ENCODE measurements at regions of chr6 and their contacts with region 1.

Region 1: DNA sequence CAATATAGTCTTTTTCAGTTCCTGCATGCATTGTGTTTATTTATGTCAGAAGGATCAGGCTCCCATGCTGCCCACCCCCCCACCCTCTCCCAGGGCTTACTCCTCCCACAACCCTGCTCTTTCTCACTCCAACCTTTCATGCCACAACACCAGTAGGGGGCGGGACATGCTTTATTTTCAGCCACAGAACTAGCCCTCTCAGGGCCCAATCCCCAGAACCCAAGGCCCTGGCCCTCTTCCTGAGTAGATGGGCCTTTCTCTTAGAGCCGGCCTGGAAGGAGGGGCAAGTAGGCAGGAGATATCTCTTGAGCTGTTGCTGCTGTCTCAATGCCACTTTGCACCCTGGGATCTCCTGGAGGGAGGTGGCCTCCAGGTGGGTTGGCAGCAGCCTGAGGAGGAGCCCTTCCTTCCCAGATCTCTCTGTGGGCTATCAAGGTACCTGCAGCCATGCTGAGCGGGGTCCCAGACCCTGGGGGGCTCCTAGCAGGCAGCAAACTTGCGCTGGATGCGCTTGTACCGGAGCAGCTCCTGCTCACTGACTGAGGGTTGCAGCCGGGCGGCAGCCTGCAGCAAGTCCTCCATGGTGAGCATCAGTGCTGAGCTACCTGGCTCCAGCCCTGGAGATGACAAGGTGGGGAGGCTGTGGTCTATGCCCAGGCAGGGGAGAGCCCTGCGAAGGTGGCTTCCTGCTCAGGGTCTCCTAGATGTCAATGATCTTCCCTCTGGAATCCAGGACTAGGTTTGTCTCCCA is 3.5 kb downstream of the GNMT start:
- DNase-seq: peak; percentile 61
- H3K4me3 Mint-ChIP-seq: no peak overlapping the region
- H3K27ac Mint-ChIP-seq: no peak overlapping the region
- H3K4me1 Mint-ChIP-seq: peaks cover 7% of the 10 kb centered on the region
- H3K27me3 Mint-ChIP-seq: no peaks in the 10 kb centered on the region
- CTCF ChIP-seq: no peak

Region 2: DNA sequence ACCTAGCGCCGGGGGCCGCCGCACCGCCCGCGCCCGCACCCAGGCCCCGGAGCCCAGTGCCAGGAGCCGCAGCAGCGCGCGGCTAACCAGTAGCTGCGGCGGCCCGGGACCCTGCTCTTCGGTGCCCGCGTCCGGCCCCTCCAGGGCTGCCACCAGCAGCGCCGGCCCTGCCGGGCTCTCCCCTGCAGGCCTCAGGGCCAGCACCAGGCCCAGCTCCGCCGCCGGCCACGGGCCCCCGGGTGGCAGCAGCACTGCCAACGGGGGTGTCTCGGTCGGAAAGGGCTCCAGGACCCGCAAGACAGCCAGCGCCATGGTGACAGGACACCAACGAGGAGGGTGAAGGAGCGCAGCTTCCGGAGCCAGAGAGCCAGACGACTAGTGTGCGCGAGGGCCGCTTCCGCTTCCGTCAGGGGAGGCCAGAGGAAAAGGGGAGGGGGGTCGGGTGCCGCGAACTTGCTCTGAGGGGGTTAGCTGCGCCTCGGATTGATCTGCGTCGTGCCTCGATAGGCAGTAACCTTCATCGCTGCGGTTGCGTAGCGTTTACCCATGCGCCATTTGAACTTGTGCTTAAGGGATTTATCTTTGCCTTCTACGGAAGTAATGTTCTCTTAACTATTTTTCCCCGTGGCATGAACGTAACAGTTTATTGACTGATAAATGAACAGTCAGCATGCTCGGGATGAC is 15.0 kb after region 1 on chr6 and contains the start of gene PEX6:
- CTCF ChIA-PET with region 1: interaction called, 11 read pairs
- POLR2A ChIA-PET with region 1: interaction called, 25 read pairs
- intact Hi-C with region 1: no loop called
- DNase-seq: peak; percentile 91
- H3K4me3 Mint-ChIP-seq: peak within 1 kb of the TSS; percentile 87
- H3K27ac Mint-ChIP-seq: peak within 1 kb of the TSS; percentile 91
- H3K4me1 Mint-ChIP-seq: peaks cover 15% of the 10 kb centered on the region
- H3K27me3 Mint-ChIP-seq: no peaks in the 10 kb centered on the region
- CTCF ChIP-seq: no peak
- total RNA-seq, gene PEX6: 25.8 and 34.0 TPM in 2 replicates

Region 3: GRCh38 chr6:42984001-42984923 is 20.2 kb after region 1 on chr6 and contains the start of gene PPP2R5D:
- CTCF ChIA-PET with region 1: interaction called, 3 read pairs
- POLR2A ChIA-PET with region 1: interaction called, 25 read pairs
- intact Hi-C with region 1: no loop called
- DNase-seq: peak; percentile 99
- H3K4me3 Mint-ChIP-seq: peak within 1 kb of the TSS; percentile 78
- H3K27ac Mint-ChIP-seq: peak within 1 kb of the TSS; percentile 90
- H3K4me1 Mint-ChIP-seq: peaks cover 39% of the 10 kb centered on the region
- H3K27me3 Mint-ChIP-seq: no peaks in the 10 kb centered on the region
- CTCF ChIP-seq: no peak
- total RNA-seq, gene PPP2R5D: 16.5 and 17.9 TPM in 2 replicates